Activated CD4-positive, alpha-beta T cell treated with anti-CD3 and anti-CD28 coated beads for 36 hours (primary cell): ENCODE measurements at regions of chr3 and their contacts with region 1.

Region 1: DNA sequence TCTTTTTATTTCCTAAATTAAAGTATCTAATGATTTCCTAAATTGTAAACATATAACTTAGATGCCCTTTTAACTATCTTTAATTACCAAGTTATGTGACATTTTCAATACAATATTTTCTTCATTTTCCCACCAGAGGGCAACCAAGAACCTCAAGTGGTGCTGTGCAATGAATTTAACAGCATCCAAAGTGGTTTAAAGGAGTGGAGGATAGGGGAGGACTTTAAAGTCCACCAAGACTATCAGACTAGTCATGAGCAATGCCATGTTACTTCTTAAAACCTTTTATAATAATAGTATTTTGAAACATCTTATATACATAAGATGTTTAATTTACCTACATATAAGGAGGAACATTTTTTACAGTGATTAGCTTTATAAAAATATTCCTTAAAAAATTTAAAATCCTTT is 74.4 kb downstream of the DLG1 start:
- DNase-seq: no peak
- ATAC-seq: peak; percentile 66
- H3K4me3 Mint-ChIP-seq: no peak overlapping the region
- H3K27ac Mint-ChIP-seq: no peak overlapping the region
- H3K4me1 Mint-ChIP-seq: peaks cover 32% of the 10 kb centered on the region
- H3K27me3 Mint-ChIP-seq: no peaks in the 10 kb centered on the region

Region 2: GRCh38 chr3:197234947-197235914 is 11.2 kb after region 1 on chr3:
- CTCF ChIA-PET with region 1: interaction called, 48 read pairs
- POLR2A ChIA-PET with region 1: no interaction called
- intact Hi-C with region 1: no loop called
- DNase-seq: no peak
- ATAC-seq: no peak
- H3K4me3 Mint-ChIP-seq: no peak overlapping the region
- H3K27ac Mint-ChIP-seq: no peak overlapping the region
- H3K4me1 Mint-ChIP-seq: peaks cover 29% of the 10 kb centered on the region
- H3K27me3 Mint-ChIP-seq: no peaks in the 10 kb centered on the region

Region 3: DNA sequence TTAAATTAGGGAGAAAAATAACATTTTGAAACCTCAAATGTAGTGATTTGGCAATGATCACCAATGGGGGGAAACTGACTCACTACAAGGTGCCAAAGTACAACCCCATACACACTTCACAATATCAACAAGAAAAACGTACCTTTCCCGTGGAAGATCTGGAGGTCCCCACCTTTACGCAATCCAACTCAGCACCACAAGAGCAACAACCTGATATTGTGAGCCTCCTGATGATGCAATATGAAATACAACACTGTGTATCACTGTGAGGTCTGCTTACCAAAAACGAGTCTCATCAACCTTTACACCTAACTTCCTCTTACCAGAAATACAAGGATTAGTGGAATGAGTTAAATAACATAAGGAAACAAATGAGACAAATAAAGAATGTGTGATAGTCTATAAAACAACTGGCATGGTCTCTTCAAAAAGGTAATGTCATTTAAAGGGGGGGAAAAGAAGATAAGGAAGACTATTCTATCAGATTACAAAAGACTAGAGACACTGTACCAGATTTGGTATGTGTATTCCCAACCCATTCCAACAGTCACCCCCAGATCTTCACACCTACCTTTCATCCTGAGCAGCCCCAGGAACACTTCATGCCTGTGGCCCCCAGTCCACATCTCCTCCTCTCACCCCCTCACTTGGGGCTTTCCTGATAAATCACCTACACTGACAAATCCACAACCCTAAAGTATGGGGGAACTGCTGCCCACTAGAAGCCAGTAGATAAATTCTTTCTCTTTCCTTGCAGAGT is 46.7 kb after region 1 on chr3:
- CTCF ChIA-PET with region 1: no interaction called
- POLR2A ChIA-PET with region 1: no interaction called
- intact Hi-C with region 1: no loop called
- DNase-seq: no peak
- ATAC-seq: no peak
- H3K4me3 Mint-ChIP-seq: no peak overlapping the region
- H3K27ac Mint-ChIP-seq: no peak overlapping the region
- H3K4me1 Mint-ChIP-seq: peaks cover 52% of the 10 kb centered on the region
- H3K27me3 Mint-ChIP-seq: no peaks in the 10 kb centered on the region

Region 4: DNA sequence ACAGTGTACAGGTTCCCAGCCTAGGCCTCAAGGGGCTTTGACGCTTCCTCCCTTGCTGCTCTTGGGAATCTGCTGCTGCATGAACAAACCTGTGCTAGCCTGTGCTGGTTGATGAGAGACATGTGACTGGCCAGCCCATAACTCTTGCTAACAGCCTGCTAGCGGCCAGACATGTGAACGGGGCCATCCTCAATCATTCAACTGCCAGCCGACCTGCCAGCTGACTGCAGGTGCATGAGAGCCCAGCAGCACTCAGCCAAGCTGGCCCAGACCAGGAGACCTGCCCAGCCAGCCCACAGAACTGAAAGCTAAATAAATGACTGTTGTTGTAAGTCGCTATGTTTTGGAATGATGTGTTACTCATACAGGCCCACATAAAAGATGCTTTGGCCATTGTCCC is 156.7 kb after region 1 on chr3:
- CTCF ChIA-PET with region 1: no interaction called
- POLR2A ChIA-PET with region 1: no interaction called
- intact Hi-C with region 1: no loop called
- DNase-seq: no peak
- ATAC-seq: no peak
- H3K4me3 Mint-ChIP-seq: no peak overlapping the region
- H3K27ac Mint-ChIP-seq: no peak overlapping the region
- H3K4me1 Mint-ChIP-seq: no peaks in the 10 kb centered on the region
- H3K27me3 Mint-ChIP-seq: peaks cover 2% of the 10 kb centered on the region

Region 5: DNA sequence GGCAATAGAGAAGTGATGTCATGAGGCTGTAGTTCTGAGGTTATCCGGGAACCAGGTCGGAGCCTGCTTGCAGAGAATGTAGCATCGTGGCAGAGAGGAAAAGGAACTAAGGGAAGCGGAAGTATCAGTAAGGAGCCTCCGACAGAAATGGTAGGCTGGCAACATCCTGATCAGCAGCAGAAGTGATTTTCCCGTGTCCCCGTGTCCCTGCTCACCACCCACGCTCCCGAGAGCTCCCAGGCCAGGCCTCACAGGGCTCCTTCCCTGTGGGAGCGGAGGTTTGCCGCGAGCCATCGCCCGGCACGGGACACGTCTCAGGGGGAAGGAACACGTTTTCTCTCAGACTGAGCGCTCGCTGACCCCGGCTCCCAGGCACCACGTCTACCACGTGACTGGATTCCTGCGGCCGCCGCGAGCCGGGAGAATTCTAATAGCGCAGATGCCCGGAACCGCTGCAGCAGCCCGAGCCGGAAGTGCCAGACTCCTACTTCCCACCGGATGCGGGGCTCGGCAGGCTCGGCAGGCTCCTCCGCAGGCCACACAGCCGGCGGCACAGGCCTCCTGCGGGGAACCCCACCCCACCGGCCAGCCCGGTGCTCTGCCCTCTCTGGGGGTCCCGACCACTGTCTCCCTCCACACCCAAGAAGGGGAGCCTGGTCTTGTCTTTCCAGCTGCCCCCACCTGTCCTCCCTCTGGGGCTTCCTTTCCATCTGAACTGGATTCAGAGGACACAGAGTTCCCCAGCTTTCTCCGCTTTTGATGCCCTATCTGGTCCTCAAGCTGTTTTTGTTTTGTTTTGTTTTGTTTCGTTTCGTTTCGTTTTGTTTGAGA is 232.4 kb after region 1 on chr3:
- CTCF ChIA-PET with region 1: interaction called, 3 read pairs
- POLR2A ChIA-PET with region 1: interaction called, 5 read pairs
- intact Hi-C with region 1: loop called (anchors 2 to 10 kb)
- DNase-seq: peak; percentile 77
- ATAC-seq: peak; percentile 55
- H3K4me3 Mint-ChIP-seq: peak overlapping the region; percentile 76
- H3K27ac Mint-ChIP-seq: peak overlapping the region; percentile 93
- H3K4me1 Mint-ChIP-seq: peaks cover 21% of the 10 kb centered on the region
- H3K27me3 Mint-ChIP-seq: peaks cover 6% of the 10 kb centered on the region

Region 6: GRCh38 chr3:197501879-197502620 is 278.0 kb after region 1 on chr3:
- CTCF ChIA-PET with region 1: interaction called, 41 read pairs
- POLR2A ChIA-PET with region 1: no interaction called
- intact Hi-C with region 1: loop called (anchors 1 to 2 kb)
- DNase-seq: peak; percentile 77
- ATAC-seq: peak; percentile 94
- H3K4me3 Mint-ChIP-seq: no peak overlapping the region
- H3K27ac Mint-ChIP-seq: no peak overlapping the region
- H3K4me1 Mint-ChIP-seq: no peaks in the 10 kb centered on the region
- H3K27me3 Mint-ChIP-seq: no peaks in the 10 kb centered on the region

Region 7: DNA sequence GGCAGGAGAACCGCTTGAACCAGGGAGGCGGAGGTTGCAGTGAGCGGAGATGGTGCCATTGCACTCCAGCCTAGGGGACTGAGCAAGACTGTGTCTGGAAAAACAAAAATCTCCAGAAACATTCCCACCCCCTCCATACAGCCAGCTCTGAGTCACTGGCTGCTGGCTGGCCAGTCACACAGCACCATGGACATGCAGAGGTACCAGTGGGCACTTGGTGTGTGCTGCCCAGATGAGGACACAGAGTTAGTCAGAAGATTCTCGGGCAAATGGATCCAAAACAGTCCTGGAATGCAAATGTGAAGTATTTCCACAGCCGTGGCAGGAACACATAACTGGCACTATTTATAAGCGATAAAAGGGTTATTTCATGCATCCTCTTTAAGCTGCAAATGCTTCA is 287.1 kb after region 1 on chr3:
- CTCF ChIA-PET with region 1: interaction called, 6 read pairs
- POLR2A ChIA-PET with region 1: no interaction called
- intact Hi-C with region 1: loop called in 1 of 2 experiments (anchors 1 kb)
- DNase-seq: no peak
- ATAC-seq: no peak
- H3K4me3 Mint-ChIP-seq: no peak overlapping the region
- H3K27ac Mint-ChIP-seq: no peak overlapping the region
- H3K4me1 Mint-ChIP-seq: peaks cover 6% of the 10 kb centered on the region
- H3K27me3 Mint-ChIP-seq: no peaks in the 10 kb centered on the region